ENCODE measurements at regions of chr6 and their contacts with region 1.

Region 1: DNA sequence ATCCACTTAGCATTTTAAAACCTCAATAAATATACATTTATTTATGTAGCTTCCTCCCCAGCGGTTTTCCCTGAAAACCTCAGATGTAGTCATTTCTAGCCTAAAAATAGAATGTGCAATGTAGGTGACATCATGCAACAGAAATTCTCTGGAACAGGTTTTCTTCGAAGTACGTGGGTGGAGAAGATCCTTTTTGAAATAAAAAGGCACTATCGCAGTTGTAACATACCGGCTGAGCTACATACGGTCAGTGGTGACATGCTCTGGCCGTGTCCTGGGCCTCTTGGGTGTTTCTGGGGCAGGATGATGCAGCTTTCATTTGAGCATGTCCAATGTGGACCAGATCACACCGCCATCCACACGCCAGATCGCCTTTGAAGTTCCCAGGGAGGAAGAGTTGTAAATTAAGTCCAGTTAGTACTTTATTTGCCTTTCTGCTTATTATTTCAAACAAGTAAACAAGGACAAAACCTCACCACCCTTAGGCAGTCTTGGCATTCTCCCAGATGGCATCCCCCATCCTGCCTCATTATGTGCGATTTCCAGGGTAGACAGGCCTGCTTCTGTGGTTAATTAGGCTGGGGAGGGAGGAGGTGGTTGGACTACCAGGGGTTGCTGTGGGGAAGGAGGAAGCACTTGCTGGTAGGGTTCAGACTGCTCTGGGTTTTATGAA is 109.5 kb upstream of the CLDN20 start:
- DNase-seq: peak; percentile 35
- H3K4me3 Mint-ChIP-seq: peak overlapping the region; percentile 66
- H3K27ac Mint-ChIP-seq: peak overlapping the region; percentile 99
- H3K4me1 Mint-ChIP-seq: peaks cover 71% of the 10 kb centered on the region
- H3K27me3 Mint-ChIP-seq: no peaks in the 10 kb centered on the region

Region 2: GRCh38 chr6:154995284-154996015 is 158.8 kb before region 1 on chr6 and contains the start of gene TIAM2:
- intact Hi-C with region 1: loop called (anchors 5 kb)
- DNase-seq: peak; percentile 18
- H3K4me3 Mint-ChIP-seq: peak within 1 kb of the TSS; percentile 71
- H3K27ac Mint-ChIP-seq: no peak within 1 kb of the TSS
- H3K4me1 Mint-ChIP-seq: peaks cover 16% of the 10 kb centered on the region
- H3K27me3 Mint-ChIP-seq: peaks cover 2% of the 10 kb centered on the region
- total RNA-seq, gene TIAM2: 41.4 and 46.0 TPM in 2 replicates

Region 3: DNA sequence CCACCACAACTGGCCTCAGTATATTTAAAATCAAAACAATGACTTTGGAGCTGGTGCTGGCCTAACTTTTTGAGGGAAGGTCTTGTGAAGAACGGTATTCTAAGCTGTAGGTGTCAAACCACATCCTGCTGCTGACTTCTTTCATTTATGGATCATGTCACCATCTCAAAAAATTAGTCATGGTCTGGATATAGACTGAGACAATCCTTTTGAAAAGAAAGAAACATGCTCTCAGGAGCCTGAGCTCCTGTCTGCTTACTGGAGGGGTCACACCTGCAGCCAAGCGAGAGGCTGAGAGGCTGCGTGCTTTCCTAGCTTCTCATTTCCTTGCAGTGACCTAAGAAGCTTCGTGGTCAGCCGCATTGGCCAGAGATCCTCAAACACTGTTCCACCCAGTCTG is 104.0 kb before region 1 on chr6:
- intact Hi-C with region 1: loop called (anchors 1 kb)
- DNase-seq: peak; percentile 22
- H3K4me3 Mint-ChIP-seq: peak overlapping the region; percentile 66
- H3K27ac Mint-ChIP-seq: peak overlapping the region; percentile 96
- H3K4me1 Mint-ChIP-seq: peaks cover 30% of the 10 kb centered on the region
- H3K27me3 Mint-ChIP-seq: no peaks in the 10 kb centered on the region

Region 4: DNA sequence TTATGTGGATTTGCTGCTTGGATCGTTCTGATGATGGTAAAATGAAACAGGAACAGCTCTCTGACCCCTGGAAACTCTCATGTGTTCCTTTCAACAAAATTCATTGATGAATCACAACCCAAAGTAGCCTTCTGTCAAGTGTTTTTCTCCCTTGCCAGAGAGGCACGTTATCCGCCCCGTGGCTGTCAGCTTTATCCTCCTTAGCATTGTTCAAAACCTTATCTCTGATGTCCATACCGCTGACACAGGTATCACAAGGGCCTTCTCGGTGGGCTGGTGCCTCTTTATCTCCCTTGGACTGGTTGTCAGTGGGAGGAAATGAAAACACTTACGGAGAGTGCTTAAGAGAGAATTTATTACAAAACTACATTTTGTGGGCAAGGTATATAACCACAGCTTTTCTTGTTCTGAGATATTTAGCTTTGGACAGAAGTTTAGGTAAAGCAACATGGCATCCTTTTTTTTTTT is 74.3 kb before region 1 on chr6:
- intact Hi-C with region 1: loop called (anchors 1 kb)
- DNase-seq: no peak
- H3K4me3 Mint-ChIP-seq: no peak overlapping the region
- H3K27ac Mint-ChIP-seq: peak overlapping the region; percentile 85
- H3K4me1 Mint-ChIP-seq: peaks cover 55% of the 10 kb centered on the region
- H3K27me3 Mint-ChIP-seq: no peaks in the 10 kb centered on the region

Region 5: DNA sequence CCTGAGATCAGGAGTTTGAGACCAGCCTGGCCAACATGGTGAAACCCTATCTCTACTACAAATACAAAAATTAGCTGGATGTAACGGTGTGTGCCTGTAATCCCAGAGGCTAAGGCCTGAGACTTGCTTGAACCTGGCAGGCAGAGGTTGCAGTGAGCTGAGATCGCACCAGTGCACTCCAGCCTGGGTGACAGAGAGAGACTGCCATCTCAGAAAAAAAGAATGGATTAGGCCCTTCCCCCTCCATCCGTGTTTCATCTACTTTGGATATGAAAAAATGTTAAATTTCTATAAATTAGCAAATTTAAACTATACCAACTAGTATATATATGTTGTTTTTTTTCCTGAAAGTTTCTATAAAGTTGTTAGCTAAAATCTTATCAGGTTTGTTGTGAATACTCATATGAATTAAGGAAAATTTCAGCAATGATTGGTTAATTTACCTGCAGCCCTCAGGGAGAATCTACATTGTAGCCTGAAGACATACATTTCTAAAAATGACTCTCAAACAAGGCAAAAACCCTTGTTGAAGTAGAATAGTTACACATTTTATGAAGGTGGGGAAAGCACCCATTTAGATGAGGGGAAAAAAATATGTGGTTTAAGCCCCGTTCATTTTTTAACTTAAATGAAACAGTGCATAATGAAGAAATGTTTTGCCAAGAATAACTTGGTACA is 38.3 kb before region 1 on chr6:
- intact Hi-C with region 1: loop called (anchors 1 kb)
- DNase-seq: no peak
- H3K4me3 Mint-ChIP-seq: no peak overlapping the region
- H3K27ac Mint-ChIP-seq: peak overlapping the region; percentile 78
- H3K4me1 Mint-ChIP-seq: peaks cover 33% of the 10 kb centered on the region
- H3K27me3 Mint-ChIP-seq: no peaks in the 10 kb centered on the region

Region 6: GRCh38 chr6:155188707-155189496 is 34.6 kb after region 1 on chr6:
- intact Hi-C with region 1: loop called (anchors 1 kb)
- DNase-seq: no peak
- H3K4me3 Mint-ChIP-seq: peak overlapping the region; percentile 26
- H3K27ac Mint-ChIP-seq: peak overlapping the region; percentile 89
- H3K4me1 Mint-ChIP-seq: peaks cover 46% of the 10 kb centered on the region
- H3K27me3 Mint-ChIP-seq: no peaks in the 10 kb centered on the region

Measured in activated T-helper 2 cell treated with anti-CD3 and anti-CD28 coated beads, Interferon-gamma antibody, Interleukin-2, Interleukin-4, amounts not matched to agents 10 μg/mL and 5 μg/mL and 100 μg/mL, durations not matched to agents 14 hours and 24 hours and 36 hours (primary cell).